ENCODE measurements at regions of chr17 and their contacts with region 1.

Region 1: GRCh38 chr17:8326511-8327302 is 12.9 kb upstream of the ODF4 start:
- DNase-seq: peak in 11 of 14 experiments; percentile 3 to 49 (median 11)
- ATAC-seq: peak; percentile 58
- H3K4me3 ChIP-seq: peak overlapping the region; percentile 34
- H3K4me3 Mint-ChIP-seq: peak overlapping the region; percentile 45
- H3K27ac ChIP-seq: no peak overlapping the region
- H3K27ac Mint-ChIP-seq: no peak overlapping the region
- H3K4me1 ChIP-seq: peaks cover 15% of the 10 kb centered on the region
- H3K4me1 Mint-ChIP-seq: peaks cover 12% of the 10 kb centered on the region
- H3K27me3 ChIP-seq: peaks cover 34 to 42% of the 10 kb centered on the region in 2 experiments
- H3K27me3 Mint-ChIP-seq: peaks cover 65% of the 10 kb centered on the region
- CTCF ChIP-seq: no peak

Region 2: GRCh38 chr17:7763919-7764318 is 562.8 kb before region 1 on chr17:
- CTCF ChIA-PET with region 1: no interaction called
- POLR2A ChIA-PET with region 1: no interaction called
- intact Hi-C with region 1: no loop called
- DNase-seq: no peak
- ATAC-seq: no peak
- H3K4me3 ChIP-seq: no peak overlapping the region
- H3K4me3 Mint-ChIP-seq: no peak overlapping the region
- H3K27ac ChIP-seq: no peak overlapping the region
- H3K27ac Mint-ChIP-seq: no peak overlapping the region
- H3K4me1 ChIP-seq: no peaks in the 10 kb centered on the region
- H3K4me1 Mint-ChIP-seq: no peaks in the 10 kb centered on the region
- H3K27me3 ChIP-seq: no peaks in the 10 kb centered on the region
- H3K27me3 Mint-ChIP-seq: peaks cover 15% of the 10 kb centered on the region
- CTCF ChIP-seq: no peak

Region 3: GRCh38 chr17:7774037-7774659 is 552.6 kb before region 1 on chr17:
- CTCF ChIA-PET with region 1: no interaction called
- POLR2A ChIA-PET with region 1: no interaction called
- intact Hi-C with region 1: loop called in 1 of 2 experiments (anchors 10 kb)
- DNase-seq: no peak
- ATAC-seq: no peak
- H3K4me3 ChIP-seq: no peak overlapping the region
- H3K4me3 Mint-ChIP-seq: no peak overlapping the region
- H3K27ac ChIP-seq: no peak overlapping the region
- H3K27ac Mint-ChIP-seq: no peak overlapping the region
- H3K4me1 ChIP-seq: no peaks in the 10 kb centered on the region
- H3K4me1 Mint-ChIP-seq: no peaks in the 10 kb centered on the region
- H3K27me3 ChIP-seq: peaks cover 2 to 7% of the 10 kb centered on the region in 2 experiments
- H3K27me3 Mint-ChIP-seq: peaks cover 53% of the 10 kb centered on the region
- CTCF ChIP-seq: no peak

Measured in CD4-positive, alpha-beta T cell (primary cell).